A549 (cell line): ENCODE measurements at regions of chr11 and their contacts with region 1.

Region 1: GRCh38 chr11:2298795-2299761 is 2.6 kb downstream of the C11orf21 start:
- DNase-seq: peak; percentile 57 to 59
- ATAC-seq: peak in 1 of 2 experiments; percentile 81; a peak in 3 of 6 replicates
- H3K4me3 ChIP-seq: no peak overlapping the region
- H3K27ac ChIP-seq: no peak overlapping the region
- H3K4me1 ChIP-seq: no peaks in the 10 kb centered on the region
- CTCF ChIP-seq: peak; percentile 45
- EP300 ChIP-seq: no peak
- POLR2A ChIP-seq: no peak
- RAD21 ChIP-seq: peak; percentile 72 to 81

Region 2: DNA sequence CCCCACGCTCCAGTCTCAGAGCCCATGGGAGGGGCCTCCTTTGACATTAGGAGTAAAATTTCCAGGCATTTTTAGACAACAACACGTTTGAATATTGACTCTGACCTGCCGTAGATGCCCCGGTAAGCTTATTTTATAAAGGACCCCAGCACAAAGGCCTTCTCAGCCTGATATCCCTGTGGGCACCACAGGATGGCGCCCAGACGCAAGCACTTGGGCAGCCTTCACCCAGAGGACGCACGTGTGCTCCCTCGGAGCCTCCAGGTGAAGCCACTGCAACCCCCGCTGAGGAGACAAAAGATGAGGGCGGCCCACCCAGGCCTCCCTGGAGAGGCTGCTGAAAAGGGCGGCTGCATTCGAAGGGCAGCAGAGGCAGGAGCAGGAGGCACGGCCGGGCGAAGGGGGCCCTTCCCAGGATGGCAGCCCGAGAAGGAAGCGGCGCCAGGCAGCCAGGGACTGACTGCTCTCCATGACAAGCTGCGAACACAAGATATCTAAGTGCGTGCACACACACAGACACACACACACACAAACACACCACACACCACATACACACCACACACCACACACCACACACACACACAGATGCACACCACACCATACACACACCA is 112.3 kb before region 1 on chr11:
- CTCF ChIA-PET with region 1: interaction called, 67 read pairs
- POLR2A ChIA-PET with region 1: no interaction called
- DNase-seq: peak; percentile 76
- ATAC-seq: peak; percentile 72 to 92
- H3K4me3 ChIP-seq: no peak overlapping the region
- H3K27ac ChIP-seq: peak overlapping the region in 1 of 2 experiments; percentile 69; a peak in 2 of 6 replicates
- H3K4me1 ChIP-seq: no peaks in the 10 kb centered on the region
- CTCF ChIP-seq: peak; percentile 56
- EP300 ChIP-seq: no peak
- POLR2A ChIP-seq: no peak
- RAD21 ChIP-seq: peak; percentile 58 to 63; a peak in 4 of 5 replicates

Region 3: GRCh38 chr11:2208691-2209369 is 90.2 kb before region 1 on chr11:
- CTCF ChIA-PET with region 1: interaction called, 138 read pairs
- POLR2A ChIA-PET with region 1: no interaction called
- DNase-seq: peak in 1 of 2 experiments; percentile 38
- ATAC-seq: peak; percentile 49 to 75; a peak in 5 of 6 replicates
- H3K4me3 ChIP-seq: no peak overlapping the region
- H3K27ac ChIP-seq: peak overlapping the region in 1 of 2 experiments; percentile 80; a peak in 2 of 6 replicates
- H3K4me1 ChIP-seq: peaks cover 31% of the 10 kb centered on the region
- CTCF ChIP-seq: no peak
- EP300 ChIP-seq: no peak
- POLR2A ChIP-seq: no peak
- RAD21 ChIP-seq: no peak

Region 4: DNA sequence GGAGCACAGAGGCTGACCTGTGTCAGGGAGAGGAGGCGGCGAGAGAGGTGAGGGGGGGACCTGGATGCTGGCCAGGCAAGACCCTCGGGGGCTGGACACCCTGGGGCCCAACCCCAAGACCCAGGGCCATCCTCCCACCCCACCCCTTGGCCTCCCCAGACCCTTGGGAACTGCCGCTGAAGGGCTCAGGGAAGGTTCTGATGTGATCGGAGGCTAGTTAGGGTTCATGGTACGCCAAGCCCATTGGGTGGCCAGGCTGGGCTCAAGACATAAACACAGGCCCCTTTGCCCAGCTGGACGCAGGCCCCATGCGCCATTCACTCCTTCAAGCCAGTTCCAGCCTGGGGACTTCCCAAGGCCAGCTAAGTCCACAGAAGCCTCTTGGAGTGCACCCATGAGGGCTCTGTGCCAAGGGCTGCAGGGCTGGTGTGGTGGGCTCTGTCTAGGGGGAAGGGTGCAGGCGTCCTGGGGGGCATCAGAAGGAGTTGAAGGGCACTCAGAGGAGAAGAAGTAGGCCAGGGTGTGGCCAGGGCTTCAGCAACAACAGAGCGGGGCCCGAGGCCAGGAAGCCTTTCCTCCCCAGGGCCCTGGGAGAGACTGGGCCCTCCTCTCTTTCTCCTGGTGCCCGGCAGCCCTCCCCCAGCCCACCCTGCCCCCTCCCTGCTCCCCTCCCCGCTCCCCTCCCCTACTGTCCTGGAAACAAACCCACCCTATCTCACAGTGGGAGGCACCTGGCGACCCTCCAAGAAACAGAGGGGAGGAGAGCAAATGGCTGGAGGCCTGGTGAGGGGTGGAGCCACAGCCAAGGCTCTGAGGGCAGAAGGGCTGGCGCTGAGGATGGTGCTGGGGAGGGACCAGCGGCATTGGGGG is 15.7 kb after region 1 on chr11:
- CTCF ChIA-PET with region 1: interaction called, 63 read pairs
- POLR2A ChIA-PET with region 1: no interaction called
- DNase-seq: no peak
- ATAC-seq: peak in 1 of 2 experiments; percentile 59; a peak in 3 of 6 replicates
- H3K4me3 ChIP-seq: no peak overlapping the region
- H3K27ac ChIP-seq: peak overlapping the region in 1 of 2 experiments; percentile 40; a peak in 3 of 6 replicates
- H3K4me1 ChIP-seq: peaks cover 4% of the 10 kb centered on the region; the same call in 1 of the 3 replicates
- CTCF ChIP-seq: no peak
- EP300 ChIP-seq: no peak
- POLR2A ChIP-seq: no peak
- RAD21 ChIP-seq: no peak